AG04450 (cell line): ENCODE measurements at regions of chr1 and their contacts with region 1.

Region 1: GRCh38 chr1:99707535-99708142 is 58.8 kb downstream of the FRRS1 start:
- DNase-seq: peak; percentile 11
- H3K4me3 ChIP-seq: no peak overlapping the region
- H3K27ac ChIP-seq: no peak overlapping the region
- H3K27me3 ChIP-seq: no peaks in the 10 kb centered on the region
- CTCF ChIP-seq: peak; percentile 87

Region 2: DNA sequence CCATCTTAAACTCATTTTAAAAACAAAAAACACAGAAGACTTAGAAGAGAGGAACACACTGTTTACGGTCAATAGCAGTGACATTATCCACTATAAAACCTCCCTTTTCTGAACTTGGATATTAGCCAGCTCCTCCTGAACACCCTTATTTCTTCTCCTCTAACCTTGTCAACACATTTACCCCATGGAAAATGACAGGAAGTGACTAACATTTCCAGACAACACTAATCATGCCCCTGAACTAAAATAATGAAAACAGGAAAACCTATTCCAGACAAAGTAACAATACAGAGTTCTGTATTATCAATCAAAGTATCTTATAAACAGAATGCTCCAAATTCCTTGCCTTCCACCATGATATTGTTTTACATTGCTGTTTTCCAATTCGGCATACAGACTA is 16.5 kb before region 1 on chr1:
- CTCF ChIA-PET with region 1: interaction called, 10 read pairs
- POLR2A ChIA-PET with region 1: no interaction called
- DNase-seq: no peak
- H3K4me3 ChIP-seq: no peak overlapping the region
- H3K27ac ChIP-seq: no peak overlapping the region
- H3K27me3 ChIP-seq: no peaks in the 10 kb centered on the region
- CTCF ChIP-seq: no peak